Activated CD4-positive, alpha-beta memory T cell treated with anti-CD3 and anti-CD28 coated beads for 36 hours (primary cell): ENCODE measurements at regions of chr2 and their contacts with region 1.

Region 1: DNA sequence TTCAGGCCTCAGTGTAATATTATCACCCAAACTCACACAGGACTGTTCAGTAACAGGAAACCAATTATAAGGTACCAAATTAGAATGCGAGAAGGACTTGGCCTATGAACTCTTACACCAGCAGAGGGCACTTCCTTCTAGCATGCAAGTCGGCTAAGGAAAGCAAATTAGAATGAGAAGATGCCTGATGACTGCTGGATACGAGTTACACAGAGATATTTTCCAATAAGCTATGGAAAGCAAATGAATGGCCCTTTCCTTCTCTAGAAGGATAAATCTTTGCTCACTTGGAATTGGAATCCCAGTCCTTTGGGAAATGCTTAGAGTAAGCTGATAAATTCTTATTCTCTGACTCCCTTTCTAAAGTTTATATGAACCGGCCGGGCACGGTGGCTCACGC is 109.8 kb downstream of the AP1S3 start:
- DNase-seq: peak; percentile 25
- H3K4me3 Mint-ChIP-seq: no peak overlapping the region
- H3K27ac Mint-ChIP-seq: no peak overlapping the region
- H3K4me1 Mint-ChIP-seq: no peaks in the 10 kb centered on the region
- H3K27me3 Mint-ChIP-seq: peaks cover 2% of the 10 kb centered on the region

Region 2: GRCh38 chr2:223797811-223798721 is 70.5 kb after region 1 on chr2:
- CTCF ChIA-PET with region 1: interaction called, 5 read pairs
- POLR2A ChIA-PET with region 1: no interaction called
- intact Hi-C with region 1: loop called (anchors 2 kb)
- DNase-seq: no peak
- H3K4me3 Mint-ChIP-seq: no peak overlapping the region
- H3K27ac Mint-ChIP-seq: no peak overlapping the region
- H3K4me1 Mint-ChIP-seq: no peaks in the 10 kb centered on the region
- H3K27me3 Mint-ChIP-seq: no peaks in the 10 kb centered on the region

Region 3: GRCh38 chr2:223837287-223838061 is 109.9 kb after region 1 on chr2 and contains the start of gene AP1S3:
- CTCF ChIA-PET with region 1: interaction called, 4 read pairs
- POLR2A ChIA-PET with region 1: no interaction called
- intact Hi-C with region 1: loop called (anchors 10 kb)
- DNase-seq: peak; percentile 83
- H3K4me3 Mint-ChIP-seq: peak within 1 kb of the TSS; percentile 94
- H3K27ac Mint-ChIP-seq: no peak within 1 kb of the TSS
- H3K4me1 Mint-ChIP-seq: peaks cover 11% of the 10 kb centered on the region
- H3K27me3 Mint-ChIP-seq: no peaks in the 10 kb centered on the region
- total RNA-seq, gene AP1S3: 10.1 to 12.1 TPM

Region 4: GRCh38 chr2:224086226-224086914 is 358.8 kb after region 1 on chr2:
- CTCF ChIA-PET with region 1: no interaction called
- POLR2A ChIA-PET with region 1: no interaction called
- intact Hi-C with region 1: no loop called
- DNase-seq: no peak
- H3K4me3 Mint-ChIP-seq: no peak overlapping the region
- H3K27ac Mint-ChIP-seq: no peak overlapping the region
- H3K4me1 Mint-ChIP-seq: peaks cover 6% of the 10 kb centered on the region
- H3K27me3 Mint-ChIP-seq: peaks cover 2% of the 10 kb centered on the region

Region 5: DNA sequence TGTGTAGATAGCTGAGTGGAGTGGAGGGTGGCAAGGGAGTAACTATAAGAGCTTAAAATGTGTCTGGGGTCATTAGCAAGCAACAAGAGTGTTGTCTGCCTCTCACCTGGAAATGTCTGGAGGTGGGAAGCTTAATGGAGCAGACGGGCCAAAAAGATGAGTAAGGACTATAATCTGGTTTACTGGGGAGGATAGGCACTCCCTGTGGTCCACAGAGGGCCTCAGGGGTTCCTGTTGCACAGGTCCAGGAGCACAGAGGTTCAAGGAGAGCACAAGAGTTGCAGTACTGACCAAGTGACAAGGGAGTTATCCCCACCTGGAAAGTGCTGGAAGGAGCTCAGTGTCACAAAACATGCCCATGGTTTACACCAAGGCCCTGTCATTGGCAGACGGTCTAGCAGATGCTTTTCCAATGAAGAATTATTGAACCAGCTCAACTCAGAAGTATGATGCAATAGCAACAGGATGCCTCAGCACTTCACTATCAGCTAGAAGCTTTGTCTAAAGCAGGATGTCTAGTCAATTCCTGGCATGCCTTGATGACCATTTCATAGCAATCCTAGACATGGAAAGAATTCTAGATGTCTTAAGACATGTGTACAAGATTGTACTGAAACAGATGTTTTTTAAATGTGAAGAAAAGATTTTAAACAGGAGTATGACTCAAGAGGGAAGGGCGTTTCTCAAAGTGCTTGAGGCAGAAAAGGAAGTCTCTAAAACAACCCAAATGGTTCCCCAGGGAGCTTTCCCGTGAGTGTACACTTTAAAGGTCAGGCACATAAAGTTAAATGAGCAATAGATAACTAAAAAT is 374.5 kb after region 1 on chr2:
- CTCF ChIA-PET with region 1: no interaction called
- POLR2A ChIA-PET with region 1: no interaction called
- intact Hi-C with region 1: no loop called
- DNase-seq: no peak
- H3K4me3 Mint-ChIP-seq: no peak overlapping the region
- H3K27ac Mint-ChIP-seq: no peak overlapping the region
- H3K4me1 Mint-ChIP-seq: no peaks in the 10 kb centered on the region
- H3K27me3 Mint-ChIP-seq: peaks cover 7% of the 10 kb centered on the region